Panc1 (cell line): ENCODE measurements at regions of chr17 and their contacts with region 1.

Region 1: DNA sequence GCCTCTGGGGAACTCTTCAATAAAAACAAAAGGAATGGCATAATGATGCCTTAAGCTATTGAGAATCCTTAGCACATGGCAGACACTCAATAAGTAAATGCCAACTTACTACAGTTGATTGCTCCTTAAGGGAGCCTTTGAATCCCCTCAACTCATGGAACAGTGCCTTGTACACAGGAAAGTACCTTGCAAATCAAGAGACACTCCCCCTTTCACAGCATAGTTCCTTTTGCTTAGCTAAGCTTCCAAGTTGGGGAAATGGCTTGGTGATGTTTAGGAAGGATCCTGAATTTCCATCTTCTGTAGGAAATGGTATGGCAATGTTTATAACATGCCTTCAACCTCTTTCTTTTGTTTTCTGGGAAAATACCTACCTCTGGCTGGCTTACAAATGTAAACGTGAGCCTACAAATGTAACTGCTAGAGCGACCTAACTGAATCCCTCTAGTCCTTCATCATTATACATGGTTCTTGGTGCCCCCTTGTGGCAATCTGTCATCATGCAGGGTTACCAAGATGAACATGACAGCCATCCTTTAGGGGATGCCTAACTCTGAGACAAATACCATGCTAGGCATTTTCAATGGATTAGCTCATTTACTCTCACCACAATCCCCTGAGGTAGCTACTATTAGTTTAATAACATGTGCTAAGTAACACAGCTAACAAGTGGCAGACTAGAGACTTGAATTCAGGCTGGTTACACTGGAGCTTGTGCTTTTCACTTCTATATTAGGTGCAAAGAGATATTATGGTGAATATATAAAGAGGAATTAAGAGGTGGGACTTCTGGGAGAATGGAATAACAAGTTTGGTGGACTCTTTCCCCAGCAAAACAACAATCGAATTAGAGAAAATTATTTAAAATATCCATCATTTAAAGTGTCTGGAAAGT is 65.0 kb downstream of the MMD start:
- DNase-seq: peak; percentile 45
- ATAC-seq: peak; percentile 96
- H3K4me3 ChIP-seq: no peak overlapping the region
- H3K27ac ChIP-seq: no peak overlapping the region
- H3K4me1 ChIP-seq: no peaks in the 10 kb centered on the region
- H3K27me3 ChIP-seq: peaks cover 2% of the 10 kb centered on the region; the same call in 1 of the 2 replicates
- CTCF ChIP-seq: peak; percentile 86

Region 2: GRCh38 chr17:55238179-55238930 is 118.3 kb before region 1 on chr17:
- CTCF ChIA-PET with region 1: no interaction called
- POLR2A ChIA-PET with region 1: no interaction called
- in situ Hi-C with region 1: no loop called
- intact Hi-C with region 1: no loop called
- DNase-seq: peak; percentile 47
- ATAC-seq: peak; percentile 98
- H3K4me3 ChIP-seq: peak overlapping the region; percentile 59 to 77
- H3K27ac ChIP-seq: peak overlapping the region; percentile 52; the same call in 1 of the 2 replicates
- H3K4me1 ChIP-seq: 0 out of 2 replicates have a peak, but pooled peaks cover 5% of the 10 kb centered on the region
- H3K27me3 ChIP-seq: peaks cover 15% of the 10 kb centered on the region
- CTCF ChIP-seq: no peak

Region 3: GRCh38 chr17:55259684-55260111 is 97.0 kb before region 1 on chr17:
- CTCF ChIA-PET with region 1: no interaction called
- POLR2A ChIA-PET with region 1: no interaction called
- in situ Hi-C with region 1: no loop called
- intact Hi-C with region 1: no loop called
- DNase-seq: no peak
- ATAC-seq: no peak
- H3K4me3 ChIP-seq: no peak overlapping the region
- H3K27ac ChIP-seq: no peak overlapping the region
- H3K4me1 ChIP-seq: peaks cover 5% of the 10 kb centered on the region
- H3K27me3 ChIP-seq: peaks cover 32% of the 10 kb centered on the region
- CTCF ChIP-seq: no peak

Region 4: GRCh38 chr17:55295411-55296170 is 61.1 kb before region 1 on chr17:
- CTCF ChIA-PET with region 1: no interaction called
- POLR2A ChIA-PET with region 1: no interaction called
- in situ Hi-C with region 1: no loop called
- intact Hi-C with region 1: loop called (anchors 10 kb)
- DNase-seq: peak; percentile 45
- ATAC-seq: peak; percentile 91
- H3K4me3 ChIP-seq: no peak overlapping the region
- H3K27ac ChIP-seq: no peak overlapping the region
- H3K4me1 ChIP-seq: no peaks in the 10 kb centered on the region
- H3K27me3 ChIP-seq: peaks cover 6% of the 10 kb centered on the region
- CTCF ChIP-seq: peak; percentile 89

Region 5: GRCh38 chr17:55513885-55514591 is 157.4 kb after region 1 on chr17:
- CTCF ChIA-PET with region 1: interaction called, 3 read pairs
- POLR2A ChIA-PET with region 1: interaction called, 6 read pairs
- in situ Hi-C with region 1: no loop called
- intact Hi-C with region 1: loop called (anchors 5 kb)
- DNase-seq: peak; percentile 58
- ATAC-seq: peak; percentile 87
- H3K4me3 ChIP-seq: no peak overlapping the region
- H3K27ac ChIP-seq: no peak overlapping the region
- H3K4me1 ChIP-seq: no peaks in the 10 kb centered on the region
- H3K27me3 ChIP-seq: peaks cover 17% of the 10 kb centered on the region
- CTCF ChIP-seq: peak; percentile 91